SK-N-SH (cell line): ENCODE measurements at regions of chr6 and their contacts with region 1.

Region 1: GRCh38 chr6:136317021-136317694 is 27.5 kb upstream of the BCLAF1 start:
- DNase-seq: peak; percentile 53
- H3K4me3 ChIP-seq: peak overlapping the region in 1 of 2 experiments; percentile 39; a peak in 1 of 4 replicates
- H3K27ac ChIP-seq: no peak overlapping the region
- H3K4me1 ChIP-seq: no peaks in the 10 kb centered on the region
- H3K27me3 ChIP-seq: no peaks in the 10 kb centered on the region; the same call in 1 of the 2 replicates
- CTCF ChIP-seq: peak; percentile 76
- EP300 ChIP-seq: no peak
- RAD21 ChIP-seq: peak; percentile 95

Region 2: GRCh38 chr6:135535989-135536414 is 781.2 kb before region 1 on chr6:
- CTCF ChIA-PET with region 1: interaction called, 13 read pairs
- POLR2A ChIA-PET with region 1: no interaction called
- DNase-seq: peak; percentile 37
- H3K4me3 ChIP-seq: peak overlapping the region in 1 of 2 experiments; percentile 14; a peak in 1 of 4 replicates
- H3K27ac ChIP-seq: peak overlapping the region in 1 of 2 experiments; percentile 48; a peak in 2 of 4 replicates
- H3K4me1 ChIP-seq: peaks cover 0 to 5% of the 10 kb centered on the region in 2 experiments; a peak in 2 of 4 replicates
- H3K27me3 ChIP-seq: no peaks in the 10 kb centered on the region
- CTCF ChIP-seq: peak; percentile 74
- EP300 ChIP-seq: no peak
- RAD21 ChIP-seq: peak; percentile 84

Region 3: GRCh38 chr6:136262940-136263339 is 54.2 kb before region 1 on chr6:
- CTCF ChIA-PET with region 1: interaction called, 11 read pairs
- POLR2A ChIA-PET with region 1: no interaction called
- DNase-seq: no peak
- H3K4me3 ChIP-seq: no peak overlapping the region
- H3K27ac ChIP-seq: peak overlapping the region in 1 of 2 experiments; percentile 11; a peak in 1 of 4 replicates
- H3K4me1 ChIP-seq: no peaks in the 10 kb centered on the region
- H3K27me3 ChIP-seq: no peaks in the 10 kb centered on the region
- CTCF ChIP-seq: no peak
- EP300 ChIP-seq: no peak
- RAD21 ChIP-seq: no peak

Region 4: DNA sequence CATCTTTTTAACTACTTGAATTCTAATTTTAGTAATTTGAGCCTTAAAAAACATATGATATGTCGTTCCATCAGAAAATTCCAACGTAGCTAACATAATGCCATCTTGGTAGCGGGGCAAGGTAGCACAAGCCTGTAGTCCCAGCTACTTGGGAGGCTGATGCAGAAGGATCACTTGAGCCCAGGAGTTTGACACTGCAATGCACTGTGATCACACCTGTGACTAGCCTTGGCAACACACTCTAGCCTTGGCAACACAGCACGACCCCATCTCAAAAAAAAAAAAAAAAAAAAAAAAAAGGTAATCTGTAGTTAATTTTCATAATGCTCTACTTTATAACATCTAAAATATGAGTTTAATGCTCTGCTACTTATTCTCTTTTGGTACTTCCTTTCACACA is 34.3 kb before region 1 on chr6:
- CTCF ChIA-PET with region 1: interaction called, 12 read pairs
- POLR2A ChIA-PET with region 1: no interaction called
- DNase-seq: no peak
- H3K4me3 ChIP-seq: no peak overlapping the region
- H3K27ac ChIP-seq: no peak overlapping the region
- H3K4me1 ChIP-seq: peaks cover 6 to 17% of the 10 kb centered on the region in 2 experiments; a peak in 3 of 4 replicates
- H3K27me3 ChIP-seq: no peaks in the 10 kb centered on the region
- CTCF ChIP-seq: no peak
- EP300 ChIP-seq: no peak
- RAD21 ChIP-seq: no peak

Region 5: GRCh38 chr6:136289579-136290409 is 27.4 kb before region 1 on chr6 and contains the start of gene BCLAF1:
- CTCF ChIA-PET with region 1: interaction called, 20 read pairs
- POLR2A ChIA-PET with region 1: interaction called, 9 read pairs
- DNase-seq: peak; percentile 92
- H3K4me3 ChIP-seq: peak within 1 kb of the TSS; percentile 93 to 98
- H3K27ac ChIP-seq: peak within 1 kb of the TSS; percentile 100
- H3K4me1 ChIP-seq: peaks cover 5 to 20% of the 10 kb centered on the region in 2 experiments; a peak in 3 of 4 replicates
- H3K27me3 ChIP-seq: no peaks in the 10 kb centered on the region
- CTCF ChIP-seq: no peak
- EP300 ChIP-seq: no peak
- RAD21 ChIP-seq: no peak
- polyA plus RNA-seq, gene BCLAF1: 21.9 and 30.4 TPM in 2 replicates

Region 6: GRCh38 chr6:136306466-136306865 is 10.7 kb before region 1 on chr6:
- CTCF ChIA-PET with region 1: interaction called, 15 read pairs
- POLR2A ChIA-PET with region 1: interaction called, 3 read pairs
- DNase-seq: no peak
- H3K4me3 ChIP-seq: no peak overlapping the region
- H3K27ac ChIP-seq: no peak overlapping the region
- H3K4me1 ChIP-seq: peaks cover 0 to 6% of the 10 kb centered on the region in 2 experiments; a peak in 1 of 4 replicates
- H3K27me3 ChIP-seq: no peaks in the 10 kb centered on the region
- CTCF ChIP-seq: no peak
- EP300 ChIP-seq: no peak
- RAD21 ChIP-seq: no peak